ENCODE measurements at regions of chr7 and their contacts with region 1.

Region 1: DNA sequence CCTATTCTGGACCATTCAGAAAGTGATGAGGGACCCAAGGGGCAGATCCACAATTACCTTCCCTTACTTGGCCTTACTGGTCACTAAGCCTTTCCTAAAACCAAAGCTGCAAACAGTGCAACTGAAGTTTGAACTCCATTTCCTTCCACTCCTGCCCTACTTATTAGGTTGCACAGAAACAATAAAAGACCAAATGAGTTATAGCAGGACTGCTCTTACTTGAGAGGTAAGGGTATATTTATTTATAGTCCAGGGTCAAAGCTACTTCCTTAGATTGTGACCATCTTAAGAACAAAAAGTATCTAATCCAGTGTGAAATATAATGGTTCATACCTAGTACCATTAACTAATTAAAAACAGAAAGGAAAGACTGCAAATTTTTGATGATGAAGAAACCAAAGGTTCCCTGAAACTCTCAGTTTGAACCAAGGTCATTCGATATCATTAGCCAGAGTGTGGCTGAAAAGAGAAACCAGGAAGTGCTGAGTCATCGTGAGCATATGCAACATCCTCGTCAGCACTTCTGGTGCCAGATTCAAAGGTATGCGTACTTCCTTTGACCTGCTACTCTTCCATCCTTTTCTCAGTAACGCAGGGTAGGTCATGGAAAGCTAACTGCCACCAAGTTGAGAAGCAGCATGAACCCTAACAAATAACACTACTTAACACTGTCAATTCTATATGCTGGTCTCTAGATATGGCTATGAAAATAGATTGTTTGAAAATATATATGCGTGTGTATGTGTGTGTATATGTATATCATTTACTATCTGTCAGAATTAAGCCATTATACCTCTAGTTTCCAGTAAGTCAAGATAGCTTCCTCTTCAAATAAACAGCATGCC is 26.8 kb downstream of the CDK6 start:
- DNase-seq: no peak
- ATAC-seq: peak; percentile 69
- H3K4me3 Mint-ChIP-seq: peak overlapping the region; percentile 63
- H3K27ac Mint-ChIP-seq: peak overlapping the region; percentile 72
- H3K4me1 Mint-ChIP-seq: peaks cover 33% of the 10 kb centered on the region
- H3K27me3 Mint-ChIP-seq: no peaks in the 10 kb centered on the region
- CTCF ChIP-seq: no peak

Region 2: GRCh38 chr7:92778972-92779371 is 30.6 kb before region 1 on chr7:
- CTCF ChIA-PET with region 1: no interaction called
- POLR2A ChIA-PET with region 1: no interaction called
- intact Hi-C with region 1: loop called (anchors 5 kb)
- DNase-seq: no peak
- ATAC-seq: no peak
- H3K4me3 Mint-ChIP-seq: no peak overlapping the region
- H3K27ac Mint-ChIP-seq: no peak overlapping the region
- H3K4me1 Mint-ChIP-seq: peaks cover 27% of the 10 kb centered on the region
- H3K27me3 Mint-ChIP-seq: no peaks in the 10 kb centered on the region
- CTCF ChIP-seq: no peak

Region 3: GRCh38 chr7:92797693-92798092 is 11.9 kb before region 1 on chr7:
- CTCF ChIA-PET with region 1: no interaction called
- POLR2A ChIA-PET with region 1: no interaction called
- intact Hi-C with region 1: loop called (anchors 1 kb)
- DNase-seq: no peak
- ATAC-seq: no peak
- H3K4me3 Mint-ChIP-seq: no peak overlapping the region
- H3K27ac Mint-ChIP-seq: no peak overlapping the region
- H3K4me1 Mint-ChIP-seq: peaks cover 13% of the 10 kb centered on the region
- H3K27me3 Mint-ChIP-seq: no peaks in the 10 kb centered on the region
- CTCF ChIP-seq: no peak